ENCODE measurements at regions of chr5 and their contacts with region 1.

Region 1: GRCh38 chr5:66100851-66101250 is 43.2 kb upstream of the SREK1 start:
- DNase-seq: no peak
- H3K4me3 ChIP-seq: no peak overlapping the region
- H3K27ac ChIP-seq: no peak overlapping the region
- H3K4me1 ChIP-seq: no peaks in the 10 kb centered on the region
- H3K27me3 ChIP-seq: no peaks in the 10 kb centered on the region
- CTCF ChIP-seq: no peak

Region 2: GRCh38 chr5:66144074-66144833 is 43.4 kb after region 1 on chr5 and contains the start of gene SREK1:
- CTCF ChIA-PET with region 1: no interaction called
- POLR2A ChIA-PET with region 1: no interaction called
- intact Hi-C with region 1: loop called (anchors 5 kb)
- DNase-seq: peak; percentile 82 to 92
- H3K4me3 ChIP-seq: peak within 1 kb of the TSS; percentile 97
- H3K27ac ChIP-seq: peak within 1 kb of the TSS; percentile 84
- H3K4me1 ChIP-seq: peaks cover 31% of the 10 kb centered on the region
- H3K27me3 ChIP-seq: no peaks in the 10 kb centered on the region
- CTCF ChIP-seq: no peak
- total RNA-seq, gene SREK1: 73.8 and 82.8 TPM in 2 replicates